ENCODE measurements at regions of chr18 and their contacts with region 1.

Region 1: DNA sequence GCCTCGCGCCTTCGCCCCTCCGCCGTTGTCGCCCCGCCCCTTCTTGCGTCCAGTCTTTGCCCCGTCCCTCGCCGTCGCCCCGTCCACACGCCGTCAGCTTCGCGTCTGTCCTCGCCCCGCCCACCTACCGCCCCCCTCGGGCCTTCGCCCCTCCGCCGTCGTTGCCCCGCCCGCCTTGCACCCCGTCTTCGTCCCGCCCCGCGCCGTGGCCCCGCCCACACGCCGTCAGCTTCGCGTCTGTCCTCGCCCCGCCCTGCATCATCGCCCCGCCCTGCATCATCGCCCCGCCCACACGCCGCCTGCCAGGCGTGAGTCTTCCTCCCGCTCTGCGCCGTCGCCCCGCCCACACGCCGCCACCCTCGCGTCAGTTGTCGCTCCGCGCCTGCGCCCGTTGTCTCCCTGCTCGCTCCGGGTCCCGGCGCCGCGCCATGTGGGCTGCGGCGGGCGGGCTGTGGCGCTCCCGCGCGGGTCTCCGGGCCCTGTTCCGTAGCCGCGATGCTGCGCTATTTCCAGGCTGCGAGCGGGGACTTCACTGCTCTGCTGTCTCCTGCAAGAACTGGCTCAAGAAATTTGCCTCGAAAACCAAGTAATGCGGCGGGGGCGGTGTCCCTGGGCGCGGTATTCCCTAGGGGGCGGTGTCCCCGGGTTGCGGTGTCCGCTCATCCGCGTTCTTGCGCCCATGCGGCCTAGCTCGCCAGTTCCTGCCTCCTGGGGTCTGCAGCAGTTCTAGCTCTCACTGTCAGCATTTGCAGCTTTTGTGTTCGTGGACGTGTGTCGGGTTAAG is at the start of gene RBFA:
- DNase-seq: peak; percentile 99 to 100 (median 100)

Region 2: DNA sequence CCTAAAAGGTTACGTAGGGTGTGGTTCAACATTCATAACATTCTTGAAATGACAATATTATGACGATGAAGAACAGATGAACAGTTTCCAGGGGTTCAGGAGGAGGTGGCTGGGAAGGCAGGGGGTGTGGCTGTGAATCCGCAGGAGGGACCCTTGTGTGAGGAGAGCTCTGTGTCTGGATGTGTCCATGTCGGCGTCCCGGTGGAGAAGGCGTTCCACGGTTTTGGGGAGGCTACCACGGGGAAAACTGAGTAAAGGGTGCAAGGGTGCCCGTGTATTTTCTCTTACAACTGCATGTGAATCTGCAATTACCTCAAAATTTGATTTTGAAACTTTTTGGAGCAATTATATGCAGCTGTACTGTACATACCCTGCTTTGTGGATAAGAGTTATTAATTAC is 189.1 kb before region 1 on chr18:
- intact Hi-C with region 1: no loop called
- DNase-seq: no peak

Region 3: DNA sequence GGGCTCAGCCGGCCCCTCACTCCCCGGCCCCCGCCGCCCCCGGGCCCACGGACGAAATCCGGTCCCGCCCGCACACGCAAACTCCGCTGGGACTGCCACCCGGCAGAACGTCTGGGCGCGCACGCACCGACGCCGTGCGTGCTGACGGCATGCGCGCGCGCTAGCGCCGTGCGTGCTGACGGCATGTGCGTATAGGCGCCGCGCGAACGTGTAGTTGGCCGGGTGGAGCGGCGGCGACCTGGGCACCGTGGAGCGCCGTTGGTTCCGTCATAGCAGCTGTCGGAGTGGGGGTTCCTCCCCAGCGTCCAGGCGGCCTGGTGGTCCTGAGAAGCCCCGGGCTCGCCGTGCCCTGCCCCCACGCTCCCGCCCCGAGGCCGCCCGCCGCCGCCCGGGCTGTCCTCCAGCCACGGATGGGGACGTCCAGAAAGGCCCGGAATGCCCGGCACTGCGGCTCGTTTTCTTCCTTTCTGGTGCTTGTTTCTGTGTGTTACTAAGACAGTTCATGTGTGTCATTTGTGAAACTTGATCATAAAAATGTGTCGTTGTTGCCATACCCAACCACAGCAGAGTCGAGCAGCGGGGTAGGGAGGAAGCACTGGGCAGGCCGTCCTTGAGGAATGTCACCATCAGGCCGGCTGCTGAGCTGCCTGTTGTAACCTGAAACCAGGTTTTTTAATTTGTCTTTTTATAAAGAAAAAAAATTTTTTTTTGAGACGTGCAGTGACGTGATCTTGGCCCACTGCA is 45.6 kb before region 1 on chr18 and contains the start of gene TXNL4A:
- intact Hi-C with region 1: loop called (anchors 5 kb)
- DNase-seq: peak; percentile 73 to 98 (median 85)

Region 4: GRCh38 chr18:80108728-80109675 is 74.7 kb after region 1 on chr18 and contains the start of gene ADNP2:
- intact Hi-C with region 1: loop called (anchors 2 kb)
- DNase-seq: peak; percentile 68 to 97 (median 81)